Calu3 (cell line): ENCODE measurements at regions of chr18 and their contacts with region 1.

Region 1: DNA sequence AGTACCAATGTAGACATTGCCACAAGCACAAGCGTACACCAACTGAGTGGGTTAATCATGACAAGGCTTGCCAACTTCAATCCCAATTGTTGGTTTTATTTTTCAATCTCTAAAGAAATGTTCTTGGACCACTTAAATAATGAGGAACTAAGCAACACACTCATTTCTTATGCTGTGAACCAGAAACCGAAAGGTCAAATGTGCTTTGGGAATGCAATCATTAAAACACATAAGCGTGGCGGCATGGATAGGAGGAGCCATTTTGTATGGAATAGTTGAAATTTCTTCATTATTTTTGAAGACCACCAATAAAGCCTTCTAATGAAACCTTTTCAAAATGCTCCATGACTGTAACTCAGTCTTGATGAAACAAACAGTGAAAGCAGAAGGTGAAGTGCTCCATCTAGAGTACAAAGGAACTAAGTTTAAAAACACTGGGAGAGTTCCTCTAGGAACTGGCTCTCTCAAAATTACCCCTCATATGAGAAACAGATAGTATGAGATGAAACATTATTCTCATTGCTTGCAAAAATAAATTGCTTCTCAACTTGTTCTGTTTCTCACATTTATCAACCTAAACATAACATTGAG is 113.2 kb upstream of the CHST9 start:
- DNase-seq: no peak
- H3K4me3 Mint-ChIP-seq: no peak overlapping the region
- H3K27ac Mint-ChIP-seq: no peak overlapping the region
- H3K4me1 Mint-ChIP-seq: peaks cover 7% of the 10 kb centered on the region
- H3K27me3 Mint-ChIP-seq: no peaks in the 10 kb centered on the region
- CTCF ChIP-seq: peak; percentile 29

Region 2: DNA sequence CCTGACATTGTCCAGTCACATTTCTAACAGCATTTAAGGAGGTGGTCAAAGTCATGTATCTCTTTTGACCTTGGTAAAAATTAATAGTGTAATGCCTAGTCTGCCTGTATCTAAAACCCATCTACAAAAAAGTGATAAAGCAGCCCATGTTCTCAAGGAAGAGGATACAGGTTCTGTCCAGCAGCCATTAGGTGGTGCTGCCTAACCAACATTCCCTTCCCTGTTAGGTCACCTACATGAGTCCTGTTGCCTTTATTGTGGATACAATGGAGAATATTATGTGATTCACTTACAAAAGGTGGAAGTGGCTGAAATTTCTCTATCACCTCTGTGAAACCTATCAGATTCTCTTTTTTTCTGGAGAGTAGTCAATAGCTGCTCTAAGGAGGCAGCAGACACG is 485.3 kb before region 1 on chr18:
- CTCF ChIA-PET with region 1: no interaction called
- intact Hi-C with region 1: loop called (anchors 1 kb)
- DNase-seq: peak; percentile 54
- H3K4me3 Mint-ChIP-seq: no peak overlapping the region
- H3K27ac Mint-ChIP-seq: no peak overlapping the region
- H3K4me1 Mint-ChIP-seq: peaks cover 30% of the 10 kb centered on the region
- H3K27me3 Mint-ChIP-seq: no peaks in the 10 kb centered on the region
- CTCF ChIP-seq: peak; percentile 61

Region 3: DNA sequence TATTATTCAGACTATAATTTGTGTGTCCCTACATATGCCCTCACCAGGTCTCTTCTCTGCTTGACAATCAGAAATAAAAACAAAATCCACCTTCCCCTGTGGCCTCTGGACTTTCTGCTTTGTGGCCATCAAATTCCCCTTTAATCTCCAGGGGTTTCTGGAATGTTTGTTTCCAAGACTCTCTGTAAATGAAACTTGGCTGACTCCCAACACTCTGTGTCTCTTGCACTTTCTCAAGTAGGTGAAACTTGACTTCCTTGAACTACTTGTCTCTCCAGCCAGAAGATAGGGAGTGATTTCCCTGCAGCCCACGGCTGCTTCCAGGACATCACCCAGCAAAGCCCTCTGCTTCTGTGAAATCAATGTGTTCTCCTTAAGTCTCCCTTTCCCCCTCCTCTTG is 378.7 kb before region 1 on chr18:
- CTCF ChIA-PET with region 1: no interaction called
- intact Hi-C with region 1: no loop called
- DNase-seq: no peak
- H3K4me3 Mint-ChIP-seq: no peak overlapping the region
- H3K27ac Mint-ChIP-seq: peak overlapping the region; percentile 30
- H3K4me1 Mint-ChIP-seq: peaks cover 35% of the 10 kb centered on the region
- H3K27me3 Mint-ChIP-seq: no peaks in the 10 kb centered on the region
- CTCF ChIP-seq: no peak

Region 4: DNA sequence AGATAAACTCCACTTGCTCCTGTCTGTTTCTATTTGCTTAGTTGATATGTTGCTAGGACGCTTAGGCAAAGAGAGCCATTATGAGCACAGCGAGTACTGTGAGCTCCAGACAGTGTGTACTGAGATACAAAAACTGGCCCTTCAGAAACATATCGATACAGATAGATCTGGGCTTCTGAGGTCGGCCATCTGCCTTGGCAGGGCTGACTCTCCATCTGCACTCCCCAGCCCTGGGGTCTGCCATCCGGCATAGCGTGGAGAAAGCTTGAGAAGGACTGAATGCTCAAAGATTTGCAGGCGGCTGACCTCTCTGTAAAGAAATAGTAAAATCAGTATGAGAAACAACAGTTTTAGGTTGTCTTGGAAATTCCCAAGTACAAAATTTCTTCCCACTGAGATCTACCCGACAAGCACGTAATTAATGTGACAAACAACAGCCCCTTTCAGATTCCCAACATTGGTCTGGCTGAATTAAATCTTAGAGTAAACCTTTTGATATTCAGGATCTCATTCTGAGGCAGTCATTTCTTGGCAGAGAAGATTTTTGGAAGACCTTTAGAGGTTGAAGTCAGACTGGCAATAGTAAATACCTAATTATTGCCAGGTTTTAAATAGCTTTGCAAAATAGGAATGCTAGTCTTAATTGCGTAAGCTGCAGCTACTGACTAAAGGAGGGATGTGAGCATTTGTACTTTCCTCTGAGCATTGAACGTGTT is 240.6 kb before region 1 on chr18:
- CTCF ChIA-PET with region 1: no interaction called
- intact Hi-C with region 1: no loop called
- DNase-seq: no peak
- H3K4me3 Mint-ChIP-seq: no peak overlapping the region
- H3K27ac Mint-ChIP-seq: no peak overlapping the region
- H3K4me1 Mint-ChIP-seq: no peaks in the 10 kb centered on the region
- H3K27me3 Mint-ChIP-seq: no peaks in the 10 kb centered on the region
- CTCF ChIP-seq: no peak

Region 5: GRCh38 chr18:27121108-27121507 is 177.2 kb before region 1 on chr18:
- CTCF ChIA-PET with region 1: no interaction called
- intact Hi-C with region 1: loop called (anchors 10 kb)
- DNase-seq: no peak
- H3K4me3 Mint-ChIP-seq: no peak overlapping the region
- H3K27ac Mint-ChIP-seq: peak overlapping the region; percentile 86
- H3K4me1 Mint-ChIP-seq: peaks cover 54% of the 10 kb centered on the region
- H3K27me3 Mint-ChIP-seq: no peaks in the 10 kb centered on the region
- CTCF ChIP-seq: no peak

Region 6: DNA sequence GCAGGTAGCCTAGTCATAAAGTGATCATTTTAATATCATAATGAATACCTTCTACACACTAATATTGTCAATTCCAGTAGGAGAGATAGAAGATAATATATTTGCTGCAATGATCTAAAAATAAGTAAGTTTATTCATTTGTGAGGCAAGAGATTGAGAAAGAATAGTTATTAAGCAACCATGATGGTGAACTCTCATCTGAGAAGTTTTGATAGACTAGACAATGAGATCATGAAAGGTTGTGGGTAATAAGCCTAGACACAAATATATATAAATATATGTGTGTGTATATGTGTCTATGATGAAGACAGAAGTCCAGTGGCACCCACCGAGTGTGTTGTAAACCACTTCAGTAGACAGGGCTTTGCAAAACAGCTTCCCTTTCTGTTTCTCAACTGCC is 67.8 kb after region 1 on chr18:
- CTCF ChIA-PET with region 1: no interaction called
- intact Hi-C with region 1: no loop called
- DNase-seq: no peak
- H3K4me3 Mint-ChIP-seq: no peak overlapping the region
- H3K27ac Mint-ChIP-seq: no peak overlapping the region
- H3K4me1 Mint-ChIP-seq: peaks cover 12% of the 10 kb centered on the region
- H3K27me3 Mint-ChIP-seq: no peaks in the 10 kb centered on the region
- CTCF ChIP-seq: no peak